ENCODE measurements at regions of chr1 and their contacts with region 1.

Region 1: GRCh38 chr1:101474039-101474665 is 237.3 kb downstream of the S1PR1 start:
- DNase-seq: peak; percentile 17
- CTCF ChIP-seq: no peak

Region 2: GRCh38 chr1:101262630-101263348 is 211.4 kb before region 1 on chr1:
- CTCF ChIA-PET with region 1: no interaction called
- POLR2A ChIA-PET with region 1: no interaction called
- DNase-seq: no peak
- CTCF ChIP-seq: no peak

Region 3: DNA sequence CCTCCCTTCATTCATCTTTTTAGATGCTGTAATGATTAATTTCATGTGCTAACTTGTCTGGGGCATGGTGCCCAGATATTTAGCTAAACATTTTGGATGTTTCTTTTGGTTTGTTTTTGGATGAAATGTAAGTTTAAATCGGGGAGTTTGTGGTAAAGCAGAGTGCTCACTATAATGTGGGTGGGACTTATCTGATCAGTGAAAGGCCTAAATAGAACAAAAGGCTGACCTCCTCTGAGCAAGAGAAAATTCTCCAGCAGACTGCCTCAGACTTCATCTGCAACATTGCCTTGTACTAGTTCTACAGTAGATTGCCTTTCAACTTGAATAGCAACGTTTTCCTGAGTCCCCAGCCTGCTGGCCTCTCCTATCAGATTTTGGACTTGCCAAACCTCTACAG is 53.7 kb before region 1 on chr1:
- CTCF ChIA-PET with region 1: no interaction called
- POLR2A ChIA-PET with region 1: no interaction called
- DNase-seq: no peak
- CTCF ChIP-seq: no peak

Region 4: DNA sequence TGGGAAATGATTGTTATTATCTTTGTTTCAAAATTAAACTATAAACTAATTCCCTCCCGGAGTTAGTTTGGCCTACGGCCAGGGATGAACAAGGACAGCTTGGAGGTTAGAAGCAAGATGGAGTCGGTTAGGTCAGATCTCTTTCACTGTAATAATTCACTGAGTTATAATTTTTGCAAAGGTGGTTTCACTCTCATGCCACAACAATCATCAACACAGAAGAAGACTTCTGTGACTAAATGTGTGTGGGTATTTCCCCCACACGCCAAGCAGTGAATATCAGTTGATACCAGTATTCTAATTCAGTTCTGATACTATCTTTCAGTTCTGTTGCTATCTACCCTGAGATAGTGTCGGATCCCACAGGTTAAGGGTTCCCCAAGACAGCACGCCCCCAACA is 22.3 kb before region 1 on chr1:
- CTCF ChIA-PET with region 1: interaction called, 26 read pairs
- POLR2A ChIA-PET with region 1: no interaction called
- DNase-seq: no peak
- CTCF ChIP-seq: no peak

Region 5: GRCh38 chr1:101484689-101485338 is 10.7 kb after region 1 on chr1:
- CTCF ChIA-PET with region 1: interaction called, 22 read pairs
- POLR2A ChIA-PET with region 1: no interaction called
- DNase-seq: no peak
- CTCF ChIP-seq: no peak

Region 6: DNA sequence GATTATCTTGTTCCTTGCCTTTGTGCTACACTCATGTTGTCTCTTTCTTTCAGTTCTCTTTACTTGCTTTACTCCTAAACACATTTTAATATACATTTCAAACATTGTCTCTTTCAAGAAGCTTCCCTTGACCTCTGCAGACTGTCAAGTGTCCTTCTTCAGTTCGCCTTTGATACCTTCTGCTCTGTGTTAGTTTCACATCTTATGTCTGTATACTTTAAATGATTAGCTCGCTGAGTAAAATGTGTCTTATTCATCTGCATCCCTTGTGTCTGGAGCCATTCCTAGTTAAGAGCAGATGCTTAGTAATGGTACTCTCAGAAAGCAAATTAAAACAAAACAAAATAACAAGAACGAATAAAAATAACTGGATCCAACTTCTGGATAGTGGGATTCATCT is 66.0 kb after region 1 on chr1:
- CTCF ChIA-PET with region 1: no interaction called
- POLR2A ChIA-PET with region 1: no interaction called
- DNase-seq: no peak
- CTCF ChIP-seq: no peak

Measured in GM10248 (cell line).